Breast epithelium (tissue), 4 donors: ENCODE measurements at regions of chr9 and their contacts with region 1.

Region 1: GRCh38 chr9:93095205-93096130 is 549 bp upstream of the CARD19 start:
- DNase-seq: peak; percentile 99 to 100
- H3K4me3 ChIP-seq: peak overlapping the region; percentile 75 to 97 (median 86)
- H3K27ac ChIP-seq: peak overlapping the region; percentile 94 to 96
- H3K4me1 ChIP-seq: peaks cover 0 to 33% of the 10 kb centered on the region in 2 donors
- H3K27me3 ChIP-seq: no peaks in the 10 kb centered on the region
- CTCF ChIP-seq: no peak
- POLR2A ChIP-seq: peak; percentile 61

Region 2: GRCh38 chr9:93037476-93037971 is 57.9 kb before region 1 on chr9:
- intact Hi-C with region 1: no loop called
- DNase-seq: no peak
- H3K4me3 ChIP-seq: no peak overlapping the region
- H3K27ac ChIP-seq: no peak overlapping the region
- H3K4me1 ChIP-seq: no peaks in the 10 kb centered on the region
- H3K27me3 ChIP-seq: no peaks in the 10 kb centered on the region
- CTCF ChIP-seq: no peak
- POLR2A ChIP-seq: no peak

Region 3: GRCh38 chr9:93134015-93134739 is 38.7 kb after region 1 on chr9 and contains the start of gene NINJ1:
- intact Hi-C with region 1: loop called (anchors 5 kb)
- DNase-seq: peak in 1 of 2 donors; percentile 65
- H3K4me3 ChIP-seq: peak within 1 kb of the TSS; percentile 61 to 86 (median 84)
- H3K27ac ChIP-seq: peak within 1 kb of the TSS; percentile 91 to 94
- H3K4me1 ChIP-seq: peaks cover 22 to 32% of the 10 kb centered on the region in 2 donors
- H3K27me3 ChIP-seq: no peaks in the 10 kb centered on the region
- CTCF ChIP-seq: peak in 1 of 3 donors; percentile 13
- POLR2A ChIP-seq: peak; percentile 35
- total RNA-seq, gene NINJ1: 89.8 to 109 (median 109) TPM